Dendritic cell treated with granulocyte-macrophage colony-stimulating factor and Interleukin-4, amounts not matched to agents 40 ng/mL and 50 ng/mL, for 4 days (primary cell): ENCODE measurements at regions of chrX and their contacts with region 1.

Region 1: DNA sequence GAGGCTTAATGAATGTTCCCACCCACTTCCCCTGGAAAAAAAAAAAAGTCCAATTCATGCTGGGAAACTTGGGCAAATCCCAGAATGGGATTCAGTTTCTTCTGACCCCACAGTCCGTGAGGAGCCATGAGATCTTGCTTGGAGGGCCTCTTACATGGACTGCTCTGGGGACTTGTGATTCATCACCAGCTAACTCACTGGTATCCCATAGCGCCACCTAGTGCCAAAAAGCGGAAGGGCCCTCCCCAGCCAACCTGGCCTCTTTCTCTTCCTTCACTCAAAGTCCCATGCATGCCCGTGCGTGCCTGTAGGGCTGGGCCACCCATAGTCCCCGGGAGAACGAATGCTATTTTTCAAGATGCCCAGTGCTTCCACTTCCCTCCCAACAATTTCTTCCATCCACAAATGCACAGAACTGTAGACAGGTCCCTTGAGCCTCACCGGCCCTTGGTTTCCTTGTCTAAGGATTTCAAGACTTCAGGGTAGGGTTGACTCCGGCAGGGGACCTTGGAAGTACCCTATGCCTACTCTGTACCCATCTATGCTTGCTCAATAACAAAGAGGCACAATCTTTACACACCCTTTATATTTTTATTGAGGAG is 5.1 kb downstream of the RTL5 start:
- H3K4me3 Mint-ChIP-seq: no peak overlapping the region
- H3K27ac Mint-ChIP-seq: peak overlapping the region; percentile 50
- H3K4me1 Mint-ChIP-seq: peaks cover 81% of the 10 kb centered on the region
- H3K27me3 Mint-ChIP-seq: no peaks in the 10 kb centered on the region

Region 2: DNA sequence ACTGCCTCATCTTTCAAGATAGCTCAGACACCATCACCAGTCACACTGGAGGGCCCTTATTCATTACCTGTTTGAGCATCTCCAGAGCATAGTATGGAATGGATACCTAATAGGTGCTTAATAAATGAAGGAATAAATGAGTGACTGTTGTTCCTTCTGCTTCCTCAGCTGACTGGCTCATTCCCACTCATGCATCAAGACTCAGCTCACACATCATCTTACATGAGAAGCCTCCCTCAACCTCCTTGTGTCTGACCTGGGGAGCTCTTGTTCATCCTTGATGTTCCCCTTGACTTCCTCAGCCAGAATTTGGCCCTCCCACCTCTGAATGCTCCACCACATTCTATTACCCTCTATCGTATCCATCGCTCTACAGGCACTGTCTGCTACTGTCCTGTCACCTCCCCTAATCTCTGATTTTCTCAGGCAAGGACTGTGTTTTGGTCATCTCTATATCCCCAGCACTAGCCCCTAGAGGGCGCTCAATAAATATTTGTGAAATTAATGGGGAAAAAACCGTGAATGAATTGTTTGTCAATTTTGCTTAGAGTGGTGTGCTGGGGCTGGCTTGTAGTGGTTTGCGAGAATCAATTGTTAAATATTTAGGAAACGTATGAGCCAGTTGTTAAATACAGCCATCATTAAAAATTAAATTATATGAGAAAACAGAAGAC is 127.7 kb before region 1 on chrX:
- intact Hi-C with region 1: loop called (anchors 5 kb)
- H3K4me3 Mint-ChIP-seq: no peak overlapping the region
- H3K27ac Mint-ChIP-seq: no peak overlapping the region
- H3K4me1 Mint-ChIP-seq: peaks cover 9% of the 10 kb centered on the region
- H3K27me3 Mint-ChIP-seq: peaks cover 6% of the 10 kb centered on the region

Region 3: GRCh38 chrX:72018277-72019112 is 108.1 kb before region 1 on chrX:
- intact Hi-C with region 1: loop called (anchors 1 kb)
- H3K4me3 Mint-ChIP-seq: peak overlapping the region; percentile 26
- H3K27ac Mint-ChIP-seq: peak overlapping the region; percentile 62
- H3K4me1 Mint-ChIP-seq: peaks cover 26% of the 10 kb centered on the region
- H3K27me3 Mint-ChIP-seq: peaks cover 6% of the 10 kb centered on the region

Region 4: GRCh38 chrX:72060196-72060920 is 66.3 kb before region 1 on chrX:
- intact Hi-C with region 1: loop called (anchors 10 kb)
- H3K4me3 Mint-ChIP-seq: no peak overlapping the region
- H3K27ac Mint-ChIP-seq: no peak overlapping the region
- H3K4me1 Mint-ChIP-seq: peaks cover 35% of the 10 kb centered on the region
- H3K27me3 Mint-ChIP-seq: peaks cover 3% of the 10 kb centered on the region

Region 5: GRCh38 chrX:72181178-72182125 is 54.8 kb after region 1 on chrX and contains the start of gene PIN4:
- intact Hi-C with region 1: loop called (anchors 5 kb)
- H3K4me3 Mint-ChIP-seq: no peak within 1 kb of the TSS
- H3K27ac Mint-ChIP-seq: no peak within 1 kb of the TSS
- H3K4me1 Mint-ChIP-seq: peaks cover 5% of the 10 kb centered on the region
- H3K27me3 Mint-ChIP-seq: no peaks in the 10 kb centered on the region

Region 6: GRCh38 chrX:72316408-72317110 is 189.9 kb after region 1 on chrX:
- intact Hi-C with region 1: no loop called
- H3K4me3 Mint-ChIP-seq: no peak overlapping the region
- H3K27ac Mint-ChIP-seq: no peak overlapping the region
- H3K4me1 Mint-ChIP-seq: no peaks in the 10 kb centered on the region
- H3K27me3 Mint-ChIP-seq: peaks cover 5% of the 10 kb centered on the region